OCI-LY7 (cell line): ENCODE measurements at regions of chr1 and their contacts with region 1.

Region 1: GRCh38 chr1:31891280-31891679 is 46.9 kb downstream of the PTP4A2 start:
- DNase-seq: no peak
- H3K4me3 ChIP-seq: no peak overlapping the region
- H3K27ac ChIP-seq: no peak overlapping the region
- H3K4me1 ChIP-seq: peaks cover 27% of the 10 kb centered on the region
- CTCF ChIP-seq: no peak

Region 2: DNA sequence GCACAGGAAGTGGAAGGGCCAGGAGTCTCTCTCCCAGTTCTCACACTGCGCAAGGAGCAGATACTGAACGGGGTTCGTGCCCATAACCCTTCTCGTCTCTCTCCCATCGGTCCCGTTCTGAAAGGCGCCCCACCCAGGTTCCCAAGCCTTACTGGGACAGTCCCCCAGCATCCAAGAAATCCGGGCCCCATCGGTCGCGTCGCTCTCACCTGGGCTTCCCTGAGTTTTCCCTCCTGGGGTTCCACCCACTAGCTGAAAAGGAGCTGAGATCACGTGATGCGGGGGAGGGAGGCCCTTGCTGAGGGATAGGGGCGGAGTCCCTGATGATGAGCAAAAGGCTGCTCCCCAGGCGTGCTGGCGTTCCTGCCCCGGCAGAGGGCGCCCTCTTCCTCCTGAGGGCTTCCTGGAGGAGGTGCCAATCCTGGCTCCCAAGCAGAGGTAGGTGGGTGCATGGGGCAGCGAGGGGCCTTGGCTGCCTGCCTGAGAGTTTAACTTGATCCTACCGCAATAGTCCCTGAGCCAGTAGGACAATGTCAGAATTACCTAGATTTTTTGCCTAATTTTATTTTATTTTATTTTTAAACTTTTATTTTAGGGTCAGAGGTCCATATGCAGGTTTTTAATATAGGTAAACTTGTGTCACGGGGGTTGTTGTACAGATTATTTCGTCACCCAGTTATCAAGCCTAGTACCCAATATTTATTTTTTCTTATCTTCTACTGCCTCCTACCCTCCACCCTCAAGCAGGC is 75.4 kb before region 1 on chr1 and contains the start of gene SPOCD1:
- CTCF ChIA-PET with region 1: no interaction called
- POLR2A ChIA-PET with region 1: no interaction called
- intact Hi-C with region 1: loop called (anchors 5 kb)
- DNase-seq: peak; percentile 87
- H3K4me3 ChIP-seq: peak within 1 kb of the TSS; percentile 27
- H3K27ac ChIP-seq: peak within 1 kb of the TSS; percentile 66
- H3K4me1 ChIP-seq: peaks cover 42% of the 10 kb centered on the region
- CTCF ChIP-seq: peak; percentile 95
- total RNA-seq, gene SPOCD1: 0.60 and 0.85 TPM in 2 replicates

Region 3: GRCh38 chr1:31831397-31832378 is 59.6 kb before region 1 on chr1:
- CTCF ChIA-PET with region 1: no interaction called
- POLR2A ChIA-PET with region 1: no interaction called
- intact Hi-C with region 1: loop called (anchors 2 kb)
- DNase-seq: no peak
- H3K4me3 ChIP-seq: no peak overlapping the region
- H3K27ac ChIP-seq: no peak overlapping the region
- H3K4me1 ChIP-seq: peaks cover 44% of the 10 kb centered on the region
- CTCF ChIP-seq: no peak

Region 4: GRCh38 chr1:31861346-31861745 is 29.9 kb before region 1 on chr1:
- CTCF ChIA-PET with region 1: no interaction called
- POLR2A ChIA-PET with region 1: no interaction called
- intact Hi-C with region 1: no loop called
- DNase-seq: peak; percentile 59
- H3K4me3 ChIP-seq: no peak overlapping the region
- H3K27ac ChIP-seq: no peak overlapping the region
- H3K4me1 ChIP-seq: peaks cover 10% of the 10 kb centered on the region
- CTCF ChIP-seq: peak; percentile 49

Region 5: DNA sequence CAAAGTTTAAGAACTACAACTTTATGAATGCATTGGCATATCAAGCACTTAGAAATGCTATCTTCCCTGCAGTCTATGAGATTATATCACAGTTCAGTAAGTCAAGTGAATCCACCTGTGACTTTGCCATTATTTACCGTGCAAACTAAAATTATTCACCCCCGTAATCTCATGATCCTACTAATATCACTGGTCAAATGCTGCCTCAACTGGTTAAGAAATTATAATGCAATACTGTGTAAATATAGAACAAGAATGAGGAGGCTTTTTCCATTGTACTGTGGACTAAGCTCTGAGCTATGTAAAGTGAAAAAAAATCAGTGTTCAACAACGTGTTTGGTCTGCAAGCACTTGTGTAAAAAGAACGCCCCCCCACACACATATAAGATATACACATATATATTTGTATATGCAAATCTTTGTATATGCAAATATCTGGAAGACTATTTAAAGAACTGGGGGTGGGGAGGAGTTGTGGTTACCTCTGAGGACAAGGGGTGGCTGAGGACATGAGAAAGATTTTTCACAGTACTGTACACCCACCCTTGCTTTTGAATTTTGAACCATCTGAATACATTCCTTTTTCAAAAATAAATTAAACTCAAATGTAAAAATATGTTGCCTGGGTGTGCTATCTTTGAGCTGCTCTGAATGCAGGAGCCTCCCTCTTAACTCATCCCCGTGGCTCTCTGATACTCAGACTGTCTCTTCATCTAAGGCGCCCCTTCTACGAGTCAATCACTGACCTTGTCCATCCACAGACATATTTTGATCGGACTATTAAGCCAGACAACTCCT is 10.2 kb before region 1 on chr1:
- CTCF ChIA-PET with region 1: no interaction called
- POLR2A ChIA-PET with region 1: interaction called, 17 read pairs
- intact Hi-C with region 1: no loop called
- DNase-seq: peak; percentile 76
- H3K4me3 ChIP-seq: peak overlapping the region; percentile 34
- H3K27ac ChIP-seq: peak overlapping the region; percentile 6
- H3K4me1 ChIP-seq: peaks cover 24% of the 10 kb centered on the region
- CTCF ChIP-seq: peak; percentile 43

Region 6: DNA sequence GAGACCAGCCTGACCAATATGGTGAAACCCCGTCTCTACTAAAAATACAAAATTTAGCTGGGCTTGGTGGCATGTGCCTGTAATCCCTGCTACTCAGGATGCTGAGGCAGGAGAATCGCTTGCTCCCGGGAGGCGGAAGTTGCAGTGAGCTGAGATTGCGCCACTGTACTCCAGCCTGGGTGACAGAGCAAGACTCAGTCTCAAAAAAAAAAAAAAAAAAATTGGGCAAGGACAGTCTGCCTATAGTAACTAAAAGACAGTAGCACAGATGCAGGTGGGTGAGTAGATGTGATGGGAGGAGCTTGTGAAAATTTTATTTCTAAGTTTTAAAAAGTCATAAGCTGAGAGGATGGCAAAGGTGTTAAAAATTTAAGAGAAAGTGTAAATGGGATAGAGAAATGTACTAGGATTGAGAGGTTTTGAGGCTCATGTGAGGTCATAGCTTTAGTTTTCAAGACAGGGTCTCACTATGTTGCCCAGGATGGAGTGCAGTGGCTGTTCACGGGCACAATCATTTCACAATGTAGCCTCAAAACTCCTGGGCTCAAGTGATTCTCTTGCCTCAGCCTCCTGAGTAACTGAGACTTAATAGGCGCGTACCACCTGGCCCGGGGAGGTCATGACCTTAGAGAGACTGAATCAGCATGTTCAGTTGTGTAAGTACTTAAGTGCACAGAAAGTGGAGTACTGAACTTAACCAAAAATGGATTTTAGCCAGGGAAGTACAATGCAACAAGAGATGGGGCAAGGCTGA is 13.2 kb after region 1 on chr1:
- CTCF ChIA-PET with region 1: no interaction called
- POLR2A ChIA-PET with region 1: interaction called, 21 read pairs
- intact Hi-C with region 1: no loop called
- DNase-seq: no peak
- H3K4me3 ChIP-seq: no peak overlapping the region
- H3K27ac ChIP-seq: no peak overlapping the region
- H3K4me1 ChIP-seq: peaks cover 14% of the 10 kb centered on the region
- CTCF ChIP-seq: no peak